Left cardiac atrium (tissue), 4 donors: ENCODE measurements at regions of chr20 and their contacts with region 1.

Region 1: GRCh38 chr20:57596998-57597939 is 23.0 kb downstream of the ZBP1 start:
- DNase-seq: peak; percentile 77
- ATAC-seq: peak; percentile 81 to 87

Region 2: DNA sequence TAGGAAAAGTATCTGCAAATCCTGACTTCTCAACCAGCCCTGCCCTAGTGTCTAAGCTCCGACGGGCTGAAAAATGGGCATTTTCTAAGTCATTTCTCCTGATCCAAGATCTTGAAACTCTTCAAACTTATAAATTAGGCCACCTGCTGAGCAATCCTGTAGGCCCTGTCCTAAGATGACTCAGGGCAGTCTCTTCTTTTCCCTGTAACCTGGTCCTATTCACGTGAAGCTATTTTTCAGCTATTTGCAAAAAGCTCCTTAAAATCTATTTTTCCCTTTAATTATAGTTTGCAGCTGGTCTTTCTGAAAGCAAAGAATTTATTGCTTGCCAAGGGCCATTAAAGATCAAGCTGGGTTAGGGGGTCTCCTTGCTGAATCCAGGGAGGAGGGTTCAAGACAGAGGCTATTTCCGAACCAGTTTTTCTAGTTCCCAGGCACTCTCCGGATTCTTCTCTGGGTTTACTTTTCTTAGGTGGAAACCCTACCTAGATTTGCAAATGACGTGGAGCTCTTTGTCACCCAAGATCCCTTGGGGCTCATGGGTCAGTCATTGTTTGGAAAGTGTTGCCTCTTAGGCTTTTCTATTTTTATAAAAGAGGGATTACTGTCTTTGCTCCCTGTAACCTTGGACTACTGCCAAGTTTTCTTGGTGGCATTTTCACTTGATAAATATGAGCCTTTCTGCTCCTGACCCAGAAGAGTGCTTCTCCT is 1030.8 kb before region 1 on chr20:
- intact Hi-C with region 1: no loop called
- DNase-seq: no peak
- ATAC-seq: peak; percentile 22 to 38

Region 3: GRCh38 chr20:57391074-57391554 is 206.2 kb before region 1 on chr20 and contains the start of gene RBM38:
- intact Hi-C with region 1: loop called in 1 of 2 experiments (anchors 10 kb)
- DNase-seq: peak; percentile 66
- ATAC-seq: peak; percentile 77 to 78
- total RNA-seq, gene RBM38: 78.6 to 101 TPM

Region 4: DNA sequence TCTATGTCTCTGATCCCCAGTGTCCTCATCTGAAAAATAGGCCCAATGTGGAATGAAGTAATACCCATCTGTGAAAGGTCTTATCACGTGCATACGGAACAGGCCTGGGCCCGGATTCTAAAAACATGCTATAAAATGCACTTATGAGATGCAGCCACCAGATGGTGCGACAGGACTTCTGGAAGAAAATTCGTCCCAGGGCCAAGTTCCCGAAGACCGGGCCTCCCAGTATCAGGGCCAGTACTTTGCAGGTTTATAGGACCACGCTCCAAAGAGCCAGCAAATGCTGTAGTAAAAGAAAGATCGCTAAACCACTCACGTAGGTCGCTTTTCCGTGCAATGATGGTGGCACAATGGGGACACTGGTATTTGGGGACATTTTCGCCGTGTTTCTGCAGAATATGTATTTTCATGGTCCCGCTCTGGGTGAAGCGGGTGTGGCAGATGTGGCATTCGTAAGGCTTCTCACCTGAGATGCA is 83.0 kb before region 1 on chr20:
- intact Hi-C with region 1: loop called (anchors 1 to 2 kb)
- DNase-seq: peak; percentile 73
- ATAC-seq: peak; percentile 82 to 87

Region 5: DNA sequence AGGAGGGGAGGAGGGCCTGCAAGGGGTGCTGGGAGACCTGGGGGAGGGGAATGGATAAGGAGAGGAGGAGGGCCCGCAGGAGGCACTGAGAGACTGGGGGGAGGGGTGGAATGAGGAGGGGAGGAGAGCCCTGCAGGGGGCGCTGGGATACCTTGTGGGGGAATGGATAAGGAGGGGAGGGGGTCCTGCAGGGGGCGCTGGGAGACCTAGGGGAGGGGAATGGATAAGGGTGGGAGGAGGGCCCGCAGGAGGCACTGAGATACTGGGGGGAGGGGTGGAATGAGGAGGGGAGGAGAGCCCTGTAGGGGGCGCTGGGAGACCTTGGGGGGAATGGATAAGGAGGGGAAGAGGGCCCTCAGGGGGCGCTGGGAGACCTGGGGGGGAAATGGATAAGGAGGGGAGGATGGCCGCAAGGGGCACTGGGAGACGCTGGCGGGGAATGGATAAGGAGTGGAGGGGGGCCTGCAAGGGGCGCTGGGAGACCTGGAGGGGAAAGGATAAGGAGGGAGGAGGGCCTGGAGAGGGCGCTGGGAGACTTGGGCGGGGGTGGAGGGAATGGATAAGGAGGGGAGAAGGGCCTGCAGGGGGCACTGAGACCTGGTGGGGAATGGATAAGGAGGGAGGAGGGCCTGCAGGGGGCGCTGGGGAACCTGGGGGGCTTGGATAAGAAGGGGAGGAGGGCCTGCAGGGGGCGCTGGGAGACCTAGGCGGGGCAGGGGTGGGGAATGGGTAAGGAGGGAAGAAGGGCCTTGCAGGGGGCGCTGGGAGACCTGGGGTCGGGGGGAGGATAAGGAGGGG is 71.0 kb before region 1 on chr20:
- intact Hi-C with region 1: no loop called
- DNase-seq: no peak
- ATAC-seq: no peak

Region 6: GRCh38 chr20:58209652-58210397 is 612.6 kb after region 1 on chr20:
- intact Hi-C with region 1: loop called (anchors 2 to 5 kb)
- DNase-seq: peak; percentile 87
- ATAC-seq: peak; percentile 87 to 91